ENCODE measurements at regions of chr5 and their contacts with region 1.

Region 1: DNA sequence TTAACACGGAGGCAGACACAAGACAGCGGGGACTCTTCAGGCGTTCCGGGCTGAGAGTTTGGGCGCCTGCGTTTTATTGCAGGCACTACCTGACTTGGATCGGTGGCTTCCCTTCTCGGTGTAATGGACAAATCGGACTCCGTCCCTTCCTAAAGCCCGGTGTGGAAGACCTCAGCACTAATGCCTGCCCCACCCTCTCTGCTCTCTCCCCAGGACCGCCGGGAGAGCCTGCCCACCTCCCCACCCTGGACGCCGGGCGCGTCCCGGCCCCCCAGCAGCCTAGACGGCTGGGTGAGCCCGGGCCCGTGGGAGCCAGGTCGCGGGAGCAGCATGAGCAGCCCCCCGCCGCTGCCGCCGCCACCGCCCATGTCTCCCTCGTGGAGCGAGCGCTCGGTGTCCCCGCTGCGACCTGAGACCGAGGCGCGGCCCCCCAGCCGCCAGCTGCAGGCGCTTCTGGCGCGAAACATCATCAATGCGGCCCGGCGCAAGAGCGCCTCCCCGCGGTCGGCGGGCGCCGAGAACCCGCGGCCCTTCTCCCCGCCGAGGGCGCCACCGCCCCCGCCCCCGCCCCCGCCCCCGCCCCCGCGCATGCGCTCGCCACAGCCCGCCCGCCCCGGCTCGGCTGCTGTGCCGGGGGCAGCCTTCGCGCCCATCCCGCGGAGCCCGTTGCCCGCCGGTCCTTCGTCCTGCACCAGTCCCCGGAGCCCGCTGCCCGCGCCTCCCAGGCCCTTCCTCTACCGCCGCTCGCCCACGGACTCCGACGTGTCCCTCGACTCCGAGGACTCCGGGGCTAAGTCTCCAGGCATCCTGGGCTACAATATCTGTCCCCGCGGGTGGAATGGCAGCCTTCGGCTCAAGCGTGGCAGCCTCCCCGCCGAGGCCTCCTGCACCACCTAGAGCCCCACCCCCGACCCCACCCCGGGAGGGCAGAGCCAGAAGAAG is 4.6 kb upstream of the MYOZ3 start:
- DNase-seq: peak; percentile 80
- H3K4me3 Mint-ChIP-seq: peak overlapping the region; percentile 70
- H3K27ac Mint-ChIP-seq: no peak overlapping the region
- H3K4me1 Mint-ChIP-seq: peaks cover 2% of the 10 kb centered on the region
- H3K27me3 Mint-ChIP-seq: no peaks in the 10 kb centered on the region

Region 2: DNA sequence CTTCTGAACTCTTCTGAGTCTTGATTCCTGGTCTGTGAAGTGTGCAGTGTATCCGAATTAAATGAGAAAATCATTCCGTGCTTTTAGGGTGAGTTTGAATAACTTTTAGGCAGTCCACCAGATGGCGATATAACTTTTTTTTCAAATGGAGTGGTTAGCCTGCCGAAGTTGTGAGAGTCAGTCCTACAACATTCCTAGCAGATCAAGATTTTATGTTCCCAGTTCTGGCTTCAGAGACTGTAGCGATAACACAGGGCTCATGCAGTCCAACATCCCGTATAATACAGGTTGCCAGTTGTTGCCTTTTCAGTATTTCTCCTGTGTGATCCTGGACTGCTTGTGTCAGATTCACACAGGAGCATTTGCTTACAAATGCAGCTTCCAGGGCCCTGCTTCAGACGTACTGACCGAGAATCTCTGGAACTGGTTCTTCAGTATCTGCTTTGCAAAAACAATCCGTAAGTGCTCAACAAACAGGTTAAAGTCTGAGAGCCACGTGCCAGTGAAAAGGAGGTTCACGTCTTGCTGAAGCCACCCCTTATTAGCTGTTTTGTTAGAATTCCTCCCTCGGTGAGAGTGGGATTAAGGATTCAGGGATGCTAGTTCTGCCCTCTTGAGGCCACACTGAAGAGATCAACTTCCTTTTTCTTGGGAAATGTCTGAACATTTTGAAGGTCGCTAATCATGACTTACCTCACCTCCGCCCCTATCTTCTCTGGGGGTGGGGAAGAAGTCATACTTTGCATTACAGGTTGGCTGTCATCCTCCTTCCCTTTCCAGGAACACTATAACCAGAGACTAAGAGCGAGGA is 144.9 kb after region 1 on chr5:
- CTCF ChIA-PET with region 1: interaction called, 3 read pairs
- POLR2A ChIA-PET with region 1: no interaction called
- intact Hi-C with region 1: loop called (anchors 5 kb)
- DNase-seq: peak; percentile 16
- H3K4me3 Mint-ChIP-seq: no peak overlapping the region
- H3K27ac Mint-ChIP-seq: no peak overlapping the region
- H3K4me1 Mint-ChIP-seq: peaks cover 13% of the 10 kb centered on the region
- H3K27me3 Mint-ChIP-seq: peaks cover 8% of the 10 kb centered on the region